Left cardiac atrium (tissue), 4 donors: ENCODE measurements at regions of chr5 and their contacts with region 1.

Region 1: GRCh38 chr5:171630027-171630669 is 155.5 kb upstream of the SMIM23 start:
- DNase-seq: peak; percentile 79
- ATAC-seq: peak; percentile 92 to 97

Region 2: GRCh38 chr5:171724468-171725204 is 94.5 kb after region 1 on chr5:
- intact Hi-C with region 1: no loop called
- DNase-seq: no peak
- ATAC-seq: peak in 1 of 2 donors; percentile 85

Region 3: DNA sequence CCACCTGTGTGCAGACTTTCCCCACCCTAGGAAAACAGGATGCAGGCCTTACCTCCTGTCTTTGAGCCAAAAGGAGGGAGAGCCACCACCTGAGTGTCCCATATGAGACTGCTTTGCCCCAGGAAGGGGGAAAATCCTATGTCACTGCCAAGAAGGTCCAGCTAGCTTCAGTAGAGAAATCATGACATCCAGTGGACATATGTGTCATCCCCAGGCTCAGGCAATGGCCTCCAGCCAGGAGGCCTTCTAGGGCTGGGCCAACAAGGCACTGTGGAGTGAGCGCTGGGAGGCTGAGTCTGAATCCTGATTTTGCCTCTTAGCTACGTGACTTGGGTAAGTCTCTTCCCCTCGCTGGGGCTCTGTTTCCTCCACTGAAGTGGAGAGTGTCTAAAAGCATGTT is 215.7 kb after region 1 on chr5:
- intact Hi-C with region 1: loop called (anchors 5 to 10 kb)
- DNase-seq: peak; percentile 59
- ATAC-seq: peak; percentile 53 to 71

Region 4: DNA sequence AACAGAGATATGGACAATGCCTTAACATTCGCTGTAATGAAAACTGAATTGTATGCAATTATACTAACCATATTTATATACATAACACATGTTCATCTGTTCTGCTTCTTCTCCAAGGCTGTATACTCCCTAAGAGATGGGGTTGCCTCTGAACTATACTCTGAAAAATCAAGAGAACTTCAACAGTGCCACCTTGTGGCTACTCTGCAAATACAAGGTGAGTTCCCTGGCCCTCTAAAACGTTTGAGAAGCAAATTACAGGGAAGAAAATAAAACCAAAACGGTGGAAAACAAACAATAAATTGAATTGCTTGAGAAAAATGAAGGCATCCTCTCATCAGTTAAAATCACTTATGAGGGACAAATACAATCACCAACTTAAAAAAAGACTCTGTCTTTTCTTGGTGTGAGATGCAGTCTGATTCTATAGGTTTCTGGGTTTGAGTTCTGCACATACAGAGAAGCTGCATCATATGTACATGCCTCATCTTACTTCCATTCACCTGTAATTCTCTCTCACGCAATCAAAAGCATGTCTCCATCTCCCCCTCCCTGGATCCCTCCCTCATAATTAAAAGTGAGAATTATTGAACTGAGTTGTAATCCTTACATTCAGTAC is 277.7 kb after region 1 on chr5:
- intact Hi-C with region 1: loop called in 1 of 2 experiments (anchors 10 kb)
- DNase-seq: peak; percentile 40
- ATAC-seq: peak; percentile 80